K562 (cell line): ENCODE measurements at regions of chr14 and their contacts with region 1.

Region 1: DNA sequence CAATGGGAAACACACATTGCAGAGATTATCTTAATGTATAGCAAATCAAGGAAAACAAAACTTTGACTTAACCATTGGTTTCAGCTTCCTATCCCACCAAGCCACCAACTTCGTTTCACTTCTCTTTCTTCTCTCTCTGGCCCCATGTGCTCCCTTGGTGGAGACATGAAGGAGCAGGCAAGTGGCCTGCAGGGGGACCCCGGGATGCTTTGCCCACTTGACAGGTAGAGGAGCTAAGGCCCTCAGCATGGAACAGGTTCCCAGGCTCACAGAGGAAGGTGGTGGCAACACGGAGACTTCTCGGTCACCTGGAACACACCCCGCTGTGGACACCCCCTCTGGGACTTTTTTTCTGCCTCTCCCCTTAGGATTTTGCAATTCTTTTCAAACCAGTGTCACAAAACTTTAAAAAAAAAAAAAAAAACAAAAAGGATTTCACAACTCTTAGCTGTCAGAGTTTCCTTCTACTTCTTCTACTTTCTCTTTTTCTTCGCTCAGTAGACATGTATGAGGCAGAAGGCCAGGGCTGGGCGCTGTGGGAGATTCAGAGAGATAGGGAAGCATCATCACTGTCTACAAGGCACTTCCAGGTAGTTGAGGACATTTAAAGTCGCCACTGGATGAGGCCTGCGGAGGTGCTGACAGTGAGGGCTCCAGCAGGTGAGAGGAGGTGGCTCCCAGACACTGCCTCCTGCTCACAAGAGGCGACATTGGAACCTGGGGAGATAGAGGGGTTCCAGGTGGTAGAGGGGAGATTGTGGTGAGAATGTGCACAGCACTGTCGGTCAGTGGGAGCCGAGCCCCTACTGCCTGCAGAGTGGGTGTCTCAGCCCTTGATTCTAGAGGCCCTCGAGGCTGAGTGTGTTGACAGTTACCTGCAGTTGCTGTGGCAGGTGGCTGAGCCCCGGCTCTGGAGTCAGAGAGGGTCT is 119.6 kb downstream of the GCH1 start:
- DNase-seq: no peak
- ATAC-seq: peak; percentile 66
- H3K4me3 ChIP-seq: no peak overlapping the region
- H3K27ac ChIP-seq: no peak overlapping the region
- H3K4me1 ChIP-seq: no peaks in the 10 kb centered on the region
- H3K27me3 ChIP-seq: no peaks in the 10 kb centered on the region
- CTCF ChIP-seq: peak in 2 of 3 experiments; percentile 19; a peak in 3 of 6 replicates
- EP300 ChIP-seq: no peak
- POLR2A ChIP-seq: no peak
- RAD21 ChIP-seq: no peak

Region 2: GRCh38 chr14:53539489-53540126 is 1243.4 kb before region 1 on chr14:
- CTCF ChIA-PET with region 1: no interaction called
- POLR2A ChIA-PET with region 1: no interaction called
- in situ Hi-C with region 1: loop called (anchors 25 kb)
- intact Hi-C with region 1: no loop called
- DNase-seq: peak; percentile 12 to 33 (median 24)
- ATAC-seq: 0 out of 3 replicates have a peak, but pooled peaks have one; percentile 31
- H3K4me3 ChIP-seq: no peak overlapping the region
- H3K27ac ChIP-seq: no peak overlapping the region
- H3K4me1 ChIP-seq: no peaks in the 10 kb centered on the region
- H3K27me3 ChIP-seq: no peaks in the 10 kb centered on the region
- CTCF ChIP-seq: peak; percentile 21 to 42 (median 35); a peak in 4 of 6 replicates
- EP300 ChIP-seq: no peak
- POLR2A ChIP-seq: no peak
- RAD21 ChIP-seq: peak; percentile 34 to 54